ENCODE measurements at regions of chr9 and their contacts with region 1.

Region 1: GRCh38 chr9:3441197-3441816 is 84.5 kb downstream of the RFX3 start:
- DNase-seq: peak; percentile 68
- H3K4me3 Mint-ChIP-seq: no peak overlapping the region
- H3K27ac Mint-ChIP-seq: no peak overlapping the region
- H3K4me1 Mint-ChIP-seq: peaks cover 8% of the 10 kb centered on the region
- H3K27me3 Mint-ChIP-seq: no peaks in the 10 kb centered on the region
- CTCF ChIP-seq: peak; percentile 52

Region 2: DNA sequence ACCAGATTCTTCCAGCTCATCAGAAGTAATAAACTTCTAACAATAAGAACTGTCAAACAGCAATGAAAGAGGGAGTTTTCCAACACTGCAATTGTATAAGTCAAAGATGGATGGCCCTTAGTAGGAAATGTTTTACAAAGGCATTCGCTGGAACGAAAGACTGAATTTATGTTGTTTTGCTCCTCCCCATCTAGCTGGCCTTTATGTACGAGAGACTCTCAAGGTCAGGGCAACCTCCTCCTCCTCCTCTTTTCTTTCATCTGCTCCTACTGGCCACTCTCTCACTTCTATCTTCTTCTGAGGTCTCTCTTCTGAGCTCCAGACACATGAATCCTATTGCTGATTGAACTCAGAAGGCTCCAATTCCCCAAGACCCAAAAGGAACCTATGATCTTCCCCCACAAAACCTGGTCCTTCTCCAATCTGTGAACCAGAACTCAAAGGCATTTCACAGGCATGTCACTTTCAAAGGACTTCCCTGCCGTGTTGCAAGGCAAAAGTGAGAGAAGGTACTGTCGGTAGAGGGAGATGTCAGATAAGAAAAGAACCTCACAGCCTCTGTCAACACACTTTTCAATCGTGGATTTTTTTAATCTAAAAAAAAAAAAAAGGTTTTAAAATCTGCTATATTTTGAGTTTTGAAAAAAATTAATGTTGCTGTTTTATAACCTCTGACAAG is 568.9 kb before region 1 on chr9:
- CTCF ChIA-PET with region 1: interaction called, 5 read pairs
- POLR2A ChIA-PET with region 1: no interaction called
- intact Hi-C with region 1: loop called (anchors 5 kb)
- DNase-seq: no peak
- H3K4me3 Mint-ChIP-seq: no peak overlapping the region
- H3K27ac Mint-ChIP-seq: no peak overlapping the region
- H3K4me1 Mint-ChIP-seq: no peaks in the 10 kb centered on the region
- H3K27me3 Mint-ChIP-seq: peaks cover 75% of the 10 kb centered on the region
- CTCF ChIP-seq: no peak

Region 3: DNA sequence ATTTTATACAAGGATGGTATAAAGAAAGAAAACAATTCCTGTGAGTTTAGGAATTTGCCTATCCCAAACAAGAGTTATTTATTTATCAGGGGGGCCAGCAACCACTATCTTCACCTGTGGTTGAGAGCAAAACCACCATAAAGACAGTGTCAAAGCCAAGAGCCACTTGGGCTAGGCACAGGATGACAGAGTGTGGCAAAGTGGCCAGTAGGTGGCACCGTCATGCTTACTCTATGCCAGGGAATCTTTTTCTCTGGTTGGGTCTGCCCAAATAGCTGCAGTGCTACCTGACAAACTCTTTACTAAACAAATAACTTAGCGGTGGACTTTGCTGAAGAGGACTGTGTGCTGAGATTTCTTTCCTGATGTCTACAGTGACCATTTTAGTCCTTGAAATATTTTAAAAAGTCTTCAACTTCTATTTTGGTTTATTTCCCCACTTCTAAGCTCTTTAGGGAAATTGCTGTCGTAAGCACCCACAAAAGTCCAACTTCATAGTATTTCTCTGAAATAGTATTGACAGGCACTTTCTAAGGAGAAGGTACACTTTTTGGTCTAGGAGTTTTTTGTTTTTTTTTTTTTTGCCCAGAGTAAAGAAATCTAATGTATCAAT is 200.5 kb before region 1 on chr9:
- CTCF ChIA-PET with region 1: interaction called, 176 read pairs
- POLR2A ChIA-PET with region 1: interaction called, 13 read pairs
- intact Hi-C with region 1: loop called (anchors 1 kb)
- DNase-seq: peak; percentile 70
- H3K4me3 Mint-ChIP-seq: no peak overlapping the region
- H3K27ac Mint-ChIP-seq: no peak overlapping the region
- H3K4me1 Mint-ChIP-seq: peaks cover 9% of the 10 kb centered on the region
- H3K27me3 Mint-ChIP-seq: no peaks in the 10 kb centered on the region
- CTCF ChIP-seq: peak; percentile 67

Region 4: DNA sequence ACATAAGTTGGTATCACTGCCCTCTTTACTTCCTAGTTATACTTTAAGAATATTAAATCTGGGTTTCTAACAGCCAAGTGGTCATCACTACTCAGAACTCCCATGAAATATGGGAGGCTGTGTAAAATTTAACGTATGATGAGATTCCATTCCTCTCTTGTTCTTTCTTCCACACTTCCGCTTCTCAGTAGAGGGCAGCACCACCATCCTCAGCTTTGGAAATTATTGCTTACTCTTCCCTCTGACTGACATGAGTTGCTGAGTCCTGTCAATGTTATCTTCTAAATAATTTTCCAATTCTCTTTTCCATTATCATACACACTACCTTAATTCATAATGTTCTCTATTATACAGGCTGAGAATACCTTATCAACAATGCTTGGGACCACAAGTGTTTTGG is 109.5 kb before region 1 on chr9:
- CTCF ChIA-PET with region 1: interaction called, 40 read pairs
- POLR2A ChIA-PET with region 1: no interaction called
- intact Hi-C with region 1: loop called (anchors 5 kb)
- DNase-seq: peak; percentile 8
- H3K4me3 Mint-ChIP-seq: no peak overlapping the region
- H3K27ac Mint-ChIP-seq: no peak overlapping the region
- H3K4me1 Mint-ChIP-seq: no peaks in the 10 kb centered on the region
- H3K27me3 Mint-ChIP-seq: no peaks in the 10 kb centered on the region
- CTCF ChIP-seq: peak; percentile 22

Region 5: GRCh38 chr9:3409453-3409852 is 31.9 kb before region 1 on chr9:
- CTCF ChIA-PET with region 1: interaction called, 10 read pairs
- POLR2A ChIA-PET with region 1: no interaction called
- intact Hi-C with region 1: no loop called
- DNase-seq: no peak
- H3K4me3 Mint-ChIP-seq: no peak overlapping the region
- H3K27ac Mint-ChIP-seq: no peak overlapping the region
- H3K4me1 Mint-ChIP-seq: no peaks in the 10 kb centered on the region
- H3K27me3 Mint-ChIP-seq: no peaks in the 10 kb centered on the region
- CTCF ChIP-seq: no peak

Region 6: GRCh38 chr9:3516667-3517330 is 75.5 kb after region 1 on chr9:
- CTCF ChIA-PET with region 1: interaction called, 11 read pairs
- POLR2A ChIA-PET with region 1: interaction called, 4 read pairs
- intact Hi-C with region 1: no loop called
- DNase-seq: no peak
- H3K4me3 Mint-ChIP-seq: no peak overlapping the region
- H3K27ac Mint-ChIP-seq: no peak overlapping the region
- H3K4me1 Mint-ChIP-seq: peaks cover 14% of the 10 kb centered on the region
- H3K27me3 Mint-ChIP-seq: no peaks in the 10 kb centered on the region
- CTCF ChIP-seq: no peak

Region 7: GRCh38 chr9:3608011-3608410 is 166.7 kb after region 1 on chr9:
- CTCF ChIA-PET with region 1: no interaction called
- POLR2A ChIA-PET with region 1: no interaction called
- intact Hi-C with region 1: no loop called
- DNase-seq: no peak
- H3K4me3 Mint-ChIP-seq: no peak overlapping the region
- H3K27ac Mint-ChIP-seq: no peak overlapping the region
- H3K4me1 Mint-ChIP-seq: no peaks in the 10 kb centered on the region
- H3K27me3 Mint-ChIP-seq: no peaks in the 10 kb centered on the region
- CTCF ChIP-seq: no peak